ENCODE measurements at regions of chr19 and their contacts with region 1.

Region 1: DNA sequence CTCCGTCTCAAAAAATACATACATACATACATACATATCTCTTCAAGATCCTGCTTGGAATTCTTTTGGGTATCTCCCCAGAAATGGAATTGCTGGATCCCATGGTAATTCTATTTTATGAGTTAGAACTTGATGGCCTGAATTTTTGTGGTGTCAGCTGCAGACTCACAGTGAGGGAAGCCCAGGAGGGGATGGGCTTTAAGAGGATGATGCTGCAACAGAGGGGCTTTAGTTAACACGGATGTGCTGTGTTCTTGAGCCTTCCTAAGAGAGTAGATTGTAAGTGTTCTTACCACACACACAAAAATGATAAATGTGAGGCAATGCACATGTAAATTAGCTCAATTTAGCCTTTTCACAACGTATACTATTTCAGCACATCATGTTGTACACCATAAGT is 31.8 kb downstream of the CACNG6 start:
- DNase-seq: no peak
- H3K4me3 ChIP-seq: no peak overlapping the region
- H3K27ac ChIP-seq: peak overlapping the region; percentile 25
- H3K4me1 ChIP-seq: peaks cover 20% of the 10 kb centered on the region
- H3K27me3 ChIP-seq: no peaks in the 10 kb centered on the region
- CTCF ChIP-seq: no peak
- POLR2A ChIP-seq: no peak

Region 2: GRCh38 chr19:53808710-53809125 is 214.5 kb before region 1 on chr19:
- CTCF ChIA-PET with region 1: interaction called, 210 read pairs
- POLR2A ChIA-PET with region 1: no interaction called
- dilution Hi-C with region 1: no loop called
- intact Hi-C with region 1: loop called (anchors 1 kb)
- DNase-seq: peak; percentile 47
- H3K4me3 ChIP-seq: no peak overlapping the region
- H3K27ac ChIP-seq: no peak overlapping the region
- H3K4me1 ChIP-seq: peaks cover 10% of the 10 kb centered on the region
- H3K27me3 ChIP-seq: no peaks in the 10 kb centered on the region
- CTCF ChIP-seq: peak; percentile 51 to 59
- POLR2A ChIP-seq: no peak

Region 3: DNA sequence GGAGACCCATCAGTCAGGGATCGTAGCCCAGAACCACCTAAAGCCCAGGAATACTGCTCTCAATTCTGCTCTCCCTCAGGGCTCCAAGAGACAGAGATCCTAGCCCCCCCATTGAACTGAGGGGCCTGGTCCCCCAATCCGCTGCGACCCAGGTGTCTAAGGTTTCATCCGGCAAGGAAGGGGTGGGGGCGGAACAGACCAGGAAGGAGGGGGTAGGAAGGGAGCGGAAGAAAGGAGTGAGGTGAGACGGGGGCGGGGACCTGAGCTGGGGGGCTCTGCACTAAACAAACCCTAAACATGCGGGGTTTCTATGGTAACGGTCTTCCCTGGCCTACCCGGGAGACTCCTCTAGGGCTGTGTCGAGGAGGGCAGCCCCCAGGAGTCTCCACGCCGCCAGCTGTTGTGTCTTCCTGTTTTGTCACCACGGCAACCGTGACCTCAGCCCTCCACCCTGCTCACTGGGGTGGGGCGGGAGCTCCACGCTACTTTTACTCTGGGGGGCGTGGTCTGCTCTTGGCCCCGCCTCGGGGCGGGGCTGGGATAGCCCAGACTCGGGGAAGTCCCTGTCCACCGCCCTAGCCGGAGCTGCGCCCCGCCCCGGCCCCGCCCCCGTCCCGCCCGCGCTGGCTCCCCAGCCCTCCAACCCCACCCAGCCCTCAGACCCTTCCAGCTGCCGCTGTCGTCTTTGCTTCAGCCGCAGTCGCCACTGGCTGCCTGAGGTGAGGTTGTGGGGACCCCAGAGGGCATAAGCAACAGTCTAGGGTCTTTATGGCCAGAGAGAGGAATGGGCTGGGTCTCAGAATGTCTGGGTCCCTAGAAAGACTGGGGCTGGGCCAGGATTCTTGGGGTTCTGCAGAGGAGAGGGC is 155.7 kb before region 1 on chr19 and contains the start of gene MYADM:
- CTCF ChIA-PET with region 1: interaction called, 29 read pairs
- POLR2A ChIA-PET with region 1: no interaction called
- dilution Hi-C with region 1: no loop called
- intact Hi-C with region 1: loop called (anchors 1 kb)
- DNase-seq: peak; percentile 99
- H3K4me3 ChIP-seq: peak within 1 kb of the TSS; percentile 52 to 88 (median 82)
- H3K27ac ChIP-seq: peak within 1 kb of the TSS; percentile 100
- H3K4me1 ChIP-seq: peaks cover 15% of the 10 kb centered on the region
- H3K27me3 ChIP-seq: no peaks in the 10 kb centered on the region
- CTCF ChIP-seq: no peak
- POLR2A ChIP-seq: peak; percentile 54
- total RNA-seq, gene MYADM: 128 and 133 TPM in 2 replicates

Region 4: DNA sequence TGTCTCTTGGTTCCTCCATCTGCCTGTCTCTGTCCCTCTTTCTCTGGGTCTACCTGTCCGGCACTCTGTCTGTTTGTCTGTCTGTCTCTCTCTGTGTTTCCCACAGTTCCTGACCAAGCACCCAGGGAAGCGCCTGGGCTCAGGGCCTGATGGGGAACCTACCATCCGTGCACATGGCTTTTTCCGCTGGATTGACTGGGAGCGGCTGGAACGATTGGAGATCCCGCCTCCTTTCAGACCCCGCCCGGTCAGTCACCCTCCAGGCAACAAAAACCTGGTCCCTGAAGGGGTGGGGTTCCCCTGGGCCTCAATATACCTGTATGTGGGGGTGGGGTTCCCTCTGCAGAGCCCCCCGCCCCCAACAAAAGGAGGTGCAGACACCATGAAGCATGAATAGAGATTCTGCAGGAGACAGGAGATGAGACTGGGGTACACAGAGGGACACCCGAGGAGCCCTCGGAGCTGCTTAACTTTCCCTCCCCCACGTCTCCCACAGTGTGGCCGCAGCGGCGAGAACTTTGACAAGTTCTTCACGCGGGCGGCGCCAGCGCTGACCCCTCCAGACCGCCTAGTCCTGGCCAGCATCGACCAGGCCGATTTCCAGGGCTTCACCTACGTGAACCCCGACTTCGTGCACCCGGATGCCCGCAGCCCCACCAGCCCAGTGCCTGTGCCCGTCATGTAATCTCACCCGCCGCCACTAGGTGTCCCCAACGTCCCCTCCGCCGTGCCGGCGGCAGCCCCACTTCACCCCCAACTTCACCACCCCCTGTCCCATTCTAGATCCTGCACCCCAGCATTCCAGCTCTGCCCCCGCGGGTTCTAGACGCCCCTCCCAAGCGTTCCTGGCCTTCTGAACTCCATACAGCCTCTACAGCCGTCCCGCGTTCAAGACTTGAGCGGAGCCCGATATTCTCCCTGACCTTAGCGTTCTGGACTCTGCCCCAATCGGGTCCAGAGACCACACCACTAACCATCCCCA is 116.7 kb before region 1 on chr19:
- CTCF ChIA-PET with region 1: interaction called, 31 read pairs
- POLR2A ChIA-PET with region 1: no interaction called
- dilution Hi-C with region 1: no loop called
- intact Hi-C with region 1: loop called (anchors 1 kb)
- DNase-seq: no peak
- H3K4me3 ChIP-seq: no peak overlapping the region
- H3K27ac ChIP-seq: no peak overlapping the region
- H3K4me1 ChIP-seq: peaks cover 6% of the 10 kb centered on the region
- H3K27me3 ChIP-seq: peaks cover 31 to 35% of the 10 kb centered on the region in 2 experiments
- CTCF ChIP-seq: peak; percentile 77 to 93
- POLR2A ChIP-seq: no peak

Region 5: GRCh38 chr19:53977991-53978731 is 45.0 kb before region 1 on chr19:
- CTCF ChIA-PET with region 1: interaction called, 33 read pairs
- POLR2A ChIA-PET with region 1: interaction called, 4 read pairs
- dilution Hi-C with region 1: no loop called
- intact Hi-C with region 1: loop called (anchors 1 kb)
- DNase-seq: peak; percentile 94
- H3K4me3 ChIP-seq: peak overlapping the region in 1 of 3 experiments; percentile 30
- H3K27ac ChIP-seq: no peak overlapping the region
- H3K4me1 ChIP-seq: peaks cover 19% of the 10 kb centered on the region
- H3K27me3 ChIP-seq: no peaks in the 10 kb centered on the region
- CTCF ChIP-seq: no peak
- POLR2A ChIP-seq: no peak

Region 6: GRCh38 chr19:54035215-54036178 is 12.3 kb after region 1 on chr19:
- CTCF ChIA-PET with region 1: interaction called, 14 read pairs
- POLR2A ChIA-PET with region 1: no interaction called
- dilution Hi-C with region 1: no loop called
- intact Hi-C with region 1: loop called (anchors 1 kb)
- DNase-seq: peak; percentile 86
- H3K4me3 ChIP-seq: no peak overlapping the region
- H3K27ac ChIP-seq: peak overlapping the region; percentile 68
- H3K4me1 ChIP-seq: peaks cover 16% of the 10 kb centered on the region
- H3K27me3 ChIP-seq: no peaks in the 10 kb centered on the region
- CTCF ChIP-seq: no peak
- POLR2A ChIP-seq: no peak

Region 7: DNA sequence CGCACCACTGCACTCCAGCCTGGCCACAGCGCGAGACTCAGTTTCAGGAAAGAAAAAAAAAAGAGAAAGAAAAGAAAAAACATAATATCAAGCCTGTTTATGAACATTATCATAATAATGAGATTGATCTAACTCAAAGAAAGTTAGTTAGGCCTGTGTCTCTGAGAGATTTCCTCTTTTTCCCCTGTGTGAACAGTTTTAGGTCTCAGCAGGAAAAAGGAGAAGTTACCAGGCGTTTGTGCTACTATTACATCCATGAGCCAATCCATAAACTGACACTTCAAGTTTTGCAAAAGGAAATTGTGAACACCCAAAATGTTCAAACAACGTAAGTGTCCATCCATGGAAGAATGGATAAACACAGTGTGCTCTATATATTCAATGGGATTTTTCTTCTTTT is 54.1 kb after region 1 on chr19:
- CTCF ChIA-PET with region 1: no interaction called
- POLR2A ChIA-PET with region 1: no interaction called
- dilution Hi-C with region 1: no loop called
- intact Hi-C with region 1: no loop called
- DNase-seq: no peak
- H3K4me3 ChIP-seq: no peak overlapping the region
- H3K27ac ChIP-seq: no peak overlapping the region
- H3K4me1 ChIP-seq: no peaks in the 10 kb centered on the region
- H3K27me3 ChIP-seq: no peaks in the 10 kb centered on the region
- CTCF ChIP-seq: no peak
- POLR2A ChIP-seq: no peak

Region 8: GRCh38 chr19:54128796-54129616 is 105.8 kb after region 1 on chr19:
- CTCF ChIA-PET with region 1: no interaction called
- POLR2A ChIA-PET with region 1: no interaction called
- dilution Hi-C with region 1: no loop called
- intact Hi-C with region 1: no loop called
- DNase-seq: no peak
- H3K4me3 ChIP-seq: no peak overlapping the region
- H3K27ac ChIP-seq: no peak overlapping the region
- H3K4me1 ChIP-seq: no peaks in the 10 kb centered on the region
- H3K27me3 ChIP-seq: no peaks in the 10 kb centered on the region
- CTCF ChIP-seq: no peak
- POLR2A ChIP-seq: no peak

Measured in endothelial cell of umbilical vein (primary cell).